ENCODE measurements at regions of chr7 and their contacts with region 1.

Region 1: DNA sequence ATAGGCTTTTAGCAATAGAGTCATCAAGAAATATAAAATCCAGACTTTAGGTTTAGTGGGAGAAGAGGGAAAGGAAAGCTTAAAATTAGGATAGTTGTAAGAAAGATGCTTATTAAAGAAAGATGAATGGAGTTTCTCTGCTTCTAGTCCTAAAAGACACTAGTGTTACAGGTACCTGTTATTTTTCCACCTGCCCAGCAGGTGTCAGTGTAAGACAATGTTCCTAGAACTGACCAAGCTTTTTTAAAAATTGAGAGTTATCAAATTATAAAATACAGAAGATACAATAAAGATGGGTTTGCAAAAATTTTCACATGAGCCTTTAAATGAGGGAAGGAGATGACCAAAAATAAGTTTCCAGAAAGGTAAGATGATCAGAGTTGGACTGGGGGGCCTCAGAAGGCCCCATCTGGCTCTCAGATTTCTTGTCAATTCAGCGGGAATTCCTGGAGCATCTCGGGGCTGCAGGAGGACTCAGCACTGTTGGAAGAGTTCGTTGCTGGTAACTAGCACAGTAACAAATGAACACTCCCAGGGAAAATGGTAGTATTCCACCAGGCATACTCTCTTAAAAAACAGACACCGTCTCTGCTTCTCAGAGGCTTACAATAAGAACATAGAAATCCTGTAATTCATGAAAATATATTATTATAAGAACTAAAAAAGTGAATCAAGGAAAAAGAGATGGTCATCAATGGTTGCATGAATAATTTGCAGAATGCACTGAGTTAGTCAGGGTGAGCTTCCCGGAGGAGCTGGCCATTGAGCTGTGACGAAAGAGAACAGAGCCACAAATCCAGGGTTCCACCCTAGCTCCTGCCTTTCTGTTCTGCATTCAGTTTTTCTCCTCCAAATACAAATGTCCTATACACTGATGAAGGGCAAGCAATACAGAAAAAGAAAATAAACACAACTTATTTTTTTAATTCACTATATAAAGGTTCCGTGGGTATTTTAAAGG is 71.8 kb upstream of the PIK3CG start:
- ATAC-seq: peak in 3 of 8 experiments; percentile 20 to 53 (median 30)
- H3K4me3 ChIP-seq: no peak overlapping the region
- H3K27ac ChIP-seq: no peak overlapping the region
- H3K4me1 ChIP-seq: no peaks in the 10 kb centered on the region

Region 2: DNA sequence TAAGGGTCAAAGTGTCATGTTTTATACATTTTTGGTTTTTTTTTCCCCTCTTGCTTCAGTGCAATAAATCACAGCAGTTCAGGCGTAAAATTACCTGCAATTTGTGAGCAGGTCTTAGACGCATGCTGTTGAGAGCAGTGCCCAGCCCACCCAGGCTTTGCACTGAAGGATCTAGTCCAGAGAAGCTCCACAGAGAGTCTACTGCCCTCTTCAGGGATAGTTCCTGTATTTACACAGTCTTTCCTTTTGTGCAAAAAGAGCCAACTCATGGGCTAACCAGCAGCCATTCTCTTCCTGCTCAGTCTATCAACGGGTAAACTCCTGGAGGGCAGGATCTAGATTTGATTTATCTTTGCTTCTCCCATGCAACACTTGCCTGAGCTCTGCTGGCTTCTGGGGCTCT is 426.3 kb before region 1 on chr7:
- in situ Hi-C with region 1: no loop called
- ATAC-seq: peak in 3 of 8 experiments; percentile 69 to 84 (median 78)
- H3K4me3 ChIP-seq: no peak overlapping the region
- H3K27ac ChIP-seq: no peak overlapping the region
- H3K4me1 ChIP-seq: no peaks in the 10 kb centered on the region

Region 3: GRCh38 chr7:106947244-106947728 is 154.0 kb after region 1 on chr7:
- in situ Hi-C with region 1: loop called in 2 of 9 experiments (anchors 10 to 25 kb)
- ATAC-seq: peak; percentile 79 to 97 (median 90)
- H3K4me3 ChIP-seq: no peak overlapping the region
- H3K27ac ChIP-seq: no peak overlapping the region
- H3K4me1 ChIP-seq: peaks cover 0 to 7% of the 10 kb centered on the region in 2 donors

Region 4: GRCh38 chr7:107725151-107725740 is 932.0 kb after region 1 on chr7:
- in situ Hi-C with region 1: loop called in 1 of 9 experiments (anchors 10 kb)
- ATAC-seq: peak in 1 of 8 experiments; percentile 43
- H3K4me3 ChIP-seq: no peak overlapping the region
- H3K27ac ChIP-seq: no peak overlapping the region
- H3K4me1 ChIP-seq: no peaks in the 10 kb centered on the region

Measured in motor neuron (in vitro differentiated cells).